BJ (cell line): ENCODE measurements at regions of chr4 and their contacts with region 1.

Region 1: GRCh38 chr4:17447675-17448298 is 64.1 kb downstream of the QDPR start:
- DNase-seq: no peak
- H3K4me3 ChIP-seq: no peak overlapping the region
- H3K27me3 ChIP-seq: no peaks in the 10 kb centered on the region
- CTCF ChIP-seq: peak; percentile 76

Region 2: DNA sequence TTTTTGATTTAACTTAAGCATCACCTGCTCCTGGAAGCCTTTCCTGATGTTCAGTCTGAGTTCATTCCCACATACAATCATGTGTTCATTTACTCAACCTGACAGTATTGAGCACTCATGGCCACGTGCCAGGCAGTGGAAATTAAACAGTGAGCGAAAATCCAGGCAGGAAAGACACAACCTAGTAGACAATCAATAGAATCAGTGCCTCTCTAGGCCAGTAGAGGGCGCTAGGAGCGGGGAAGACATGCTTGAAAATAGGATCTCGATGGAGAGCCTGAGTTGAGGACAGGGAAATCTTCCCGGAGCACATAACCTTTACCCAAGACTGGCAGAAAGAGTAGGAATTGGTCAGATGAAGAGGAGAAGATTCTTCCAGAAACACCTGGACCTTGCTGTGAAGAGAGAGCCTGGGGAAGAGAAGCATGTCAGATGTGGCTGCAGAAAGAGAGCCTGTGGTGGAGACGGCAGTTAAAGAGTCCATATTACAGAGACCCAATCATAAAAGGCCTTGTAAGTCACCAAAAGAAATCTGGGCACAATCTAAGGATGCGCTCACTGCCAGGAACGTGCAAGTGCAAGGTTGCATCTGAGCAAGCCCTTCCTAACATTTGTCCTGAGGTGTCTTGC is 652.9 kb before region 1 on chr4:
- CTCF ChIA-PET with region 1: interaction called, 15 read pairs
- POLR2A ChIA-PET with region 1: no interaction called
- DNase-seq: no peak
- H3K4me3 ChIP-seq: no peak overlapping the region
- H3K27me3 ChIP-seq: no peaks in the 10 kb centered on the region
- CTCF ChIP-seq: peak; percentile 87

Region 3: DNA sequence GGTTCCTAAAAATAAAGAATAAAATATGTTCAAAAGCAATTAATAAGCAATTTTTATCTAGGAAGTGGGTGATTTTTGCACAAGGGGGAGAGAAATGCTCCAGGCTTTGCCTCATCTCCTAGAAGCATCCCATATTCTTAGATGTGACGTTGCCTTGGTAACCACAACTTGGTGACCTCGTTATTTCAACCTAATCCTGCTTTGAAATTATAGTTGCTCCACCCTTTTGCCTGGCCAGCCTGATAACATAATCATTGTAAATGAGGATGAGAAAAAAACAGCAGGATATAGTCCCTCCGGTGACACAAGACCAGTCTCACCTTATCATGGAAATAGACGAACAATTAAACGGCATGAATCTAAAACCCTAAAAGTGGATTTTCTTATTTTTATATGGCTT is 130.3 kb before region 1 on chr4:
- CTCF ChIA-PET with region 1: no interaction called
- POLR2A ChIA-PET with region 1: no interaction called
- DNase-seq: no peak
- H3K4me3 ChIP-seq: no peak overlapping the region
- H3K27me3 ChIP-seq: no peaks in the 10 kb centered on the region
- CTCF ChIP-seq: no peak

Region 4: GRCh38 chr4:17347445-17347844 is 100.3 kb before region 1 on chr4:
- CTCF ChIA-PET with region 1: interaction called, 32 read pairs
- POLR2A ChIA-PET with region 1: no interaction called
- DNase-seq: no peak
- H3K4me3 ChIP-seq: no peak overlapping the region
- H3K27me3 ChIP-seq: no peaks in the 10 kb centered on the region; the same call in 1 of the 2 replicates
- CTCF ChIP-seq: peak; percentile 59

Region 5: DNA sequence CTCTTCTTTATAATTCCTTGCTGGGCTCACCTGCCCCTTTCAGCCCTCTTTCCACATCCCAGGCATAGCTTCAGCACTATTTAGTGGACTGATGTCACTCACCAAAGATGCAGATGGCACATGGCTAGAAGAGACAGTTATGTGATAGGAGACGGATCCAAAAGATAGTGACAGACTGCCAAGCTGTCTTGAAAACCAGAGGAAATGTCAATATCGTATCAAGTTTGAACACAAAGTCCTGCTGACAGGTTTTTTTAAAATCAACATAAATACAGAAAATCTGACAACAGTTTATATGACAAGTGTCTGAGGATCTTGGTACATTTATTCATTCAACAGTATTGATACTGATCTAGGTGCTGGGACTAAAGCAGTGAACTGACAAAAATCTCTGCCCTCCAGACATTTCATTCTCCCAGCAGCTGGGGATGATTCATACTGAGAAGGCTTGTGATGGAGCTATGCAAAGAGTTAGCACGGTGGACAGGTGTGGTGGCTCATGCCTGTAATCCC is 81.7 kb after region 1 on chr4:
- CTCF ChIA-PET with region 1: no interaction called
- POLR2A ChIA-PET with region 1: no interaction called
- DNase-seq: no peak
- H3K4me3 ChIP-seq: no peak overlapping the region
- H3K27me3 ChIP-seq: peaks cover 1% of the 10 kb centered on the region; the same call in 1 of the 2 replicates
- CTCF ChIP-seq: no peak

Region 6: GRCh38 chr4:17647927-17648326 is 200.1 kb after region 1 on chr4:
- CTCF ChIA-PET with region 1: no interaction called
- POLR2A ChIA-PET with region 1: no interaction called
- DNase-seq: no peak
- H3K4me3 ChIP-seq: no peak overlapping the region
- H3K27me3 ChIP-seq: no peaks in the 10 kb centered on the region
- CTCF ChIP-seq: no peak